Heart left ventricle (tissue), 16 donors: ENCODE measurements at regions of chr20 and their contacts with region 1.

Region 1: DNA sequence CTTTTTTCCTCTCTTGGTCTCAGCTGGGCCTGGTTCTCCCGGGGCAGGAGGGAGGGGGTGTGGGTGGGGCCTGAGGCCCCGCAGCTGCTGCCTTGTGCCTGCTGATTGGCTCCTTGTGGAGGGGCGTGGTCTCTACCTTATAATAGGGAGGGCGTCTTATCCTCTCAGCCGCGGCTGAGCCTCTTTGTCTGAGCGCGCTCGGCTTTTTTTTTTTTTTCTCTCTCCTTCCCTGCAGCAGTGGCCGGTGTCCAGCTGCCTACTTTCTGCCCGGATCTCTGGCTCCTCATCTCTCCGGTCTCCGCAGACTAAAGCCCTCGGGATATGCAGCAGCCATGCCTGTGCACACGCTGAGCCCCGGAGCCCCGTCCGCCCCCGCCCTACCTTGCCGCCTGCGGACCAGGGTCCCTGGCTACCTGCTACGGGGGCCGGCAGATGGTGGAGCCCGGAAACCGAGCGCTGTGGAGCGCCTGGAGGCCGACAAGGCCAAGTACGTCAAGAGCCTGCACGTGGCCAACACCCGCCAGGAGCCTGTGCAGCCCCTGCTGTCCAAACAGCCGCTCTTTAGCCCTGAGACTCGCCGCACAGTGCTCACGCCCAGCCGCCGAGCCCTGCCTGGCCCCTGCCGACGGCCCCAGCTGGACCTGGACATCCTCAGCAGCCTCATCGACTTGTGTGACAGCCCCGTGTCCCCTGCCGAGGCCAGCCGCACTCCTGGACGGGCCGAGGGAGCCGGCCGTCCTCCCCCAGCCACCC is 11.1 kb downstream of the FAM110A start:
- DNase-seq: peak; percentile 92 to 95 (median 93)
- ATAC-seq: peak; percentile 97 to 99 (median 98)
- H3K4me3 ChIP-seq: peak overlapping the region in 11 of 12 donors; percentile 10 to 62 (median 50)
- H3K27ac ChIP-seq: peak overlapping the region in 2 of 12 donors; percentile 48 to 50
- H3K4me1 ChIP-seq: peaks cover 0 to 62% (median 18%) of the 10 kb centered on the region in 12 donors
- H3K27me3 ChIP-seq: peaks cover 0 to 8% (median 0%) of the 10 kb centered on the region in 9 donors
- CTCF ChIP-seq: no peak
- POLR2A ChIP-seq: no peak

Region 2: GRCh38 chr20:667391-667964 is 177.2 kb before region 1 on chr20:
- intact Hi-C with region 1: no loop called
- DNase-seq: peak in 2 of 5 donors; percentile 60 to 75
- ATAC-seq: peak in 2 of 4 donors; percentile 45 to 51
- H3K4me3 ChIP-seq: no peak overlapping the region
- H3K27ac ChIP-seq: peak overlapping the region in 11 of 12 donors; percentile 6 to 80 (median 62)
- H3K4me1 ChIP-seq: peaks cover 0 to 53% (median 10%) of the 10 kb centered on the region in 12 donors
- H3K27me3 ChIP-seq: peaks cover 6 to 57% (median 39%) of the 10 kb centered on the region in 9 donors
- CTCF ChIP-seq: peak; percentile 71 to 92 (median 81)
- POLR2A ChIP-seq: no peak

Region 3: DNA sequence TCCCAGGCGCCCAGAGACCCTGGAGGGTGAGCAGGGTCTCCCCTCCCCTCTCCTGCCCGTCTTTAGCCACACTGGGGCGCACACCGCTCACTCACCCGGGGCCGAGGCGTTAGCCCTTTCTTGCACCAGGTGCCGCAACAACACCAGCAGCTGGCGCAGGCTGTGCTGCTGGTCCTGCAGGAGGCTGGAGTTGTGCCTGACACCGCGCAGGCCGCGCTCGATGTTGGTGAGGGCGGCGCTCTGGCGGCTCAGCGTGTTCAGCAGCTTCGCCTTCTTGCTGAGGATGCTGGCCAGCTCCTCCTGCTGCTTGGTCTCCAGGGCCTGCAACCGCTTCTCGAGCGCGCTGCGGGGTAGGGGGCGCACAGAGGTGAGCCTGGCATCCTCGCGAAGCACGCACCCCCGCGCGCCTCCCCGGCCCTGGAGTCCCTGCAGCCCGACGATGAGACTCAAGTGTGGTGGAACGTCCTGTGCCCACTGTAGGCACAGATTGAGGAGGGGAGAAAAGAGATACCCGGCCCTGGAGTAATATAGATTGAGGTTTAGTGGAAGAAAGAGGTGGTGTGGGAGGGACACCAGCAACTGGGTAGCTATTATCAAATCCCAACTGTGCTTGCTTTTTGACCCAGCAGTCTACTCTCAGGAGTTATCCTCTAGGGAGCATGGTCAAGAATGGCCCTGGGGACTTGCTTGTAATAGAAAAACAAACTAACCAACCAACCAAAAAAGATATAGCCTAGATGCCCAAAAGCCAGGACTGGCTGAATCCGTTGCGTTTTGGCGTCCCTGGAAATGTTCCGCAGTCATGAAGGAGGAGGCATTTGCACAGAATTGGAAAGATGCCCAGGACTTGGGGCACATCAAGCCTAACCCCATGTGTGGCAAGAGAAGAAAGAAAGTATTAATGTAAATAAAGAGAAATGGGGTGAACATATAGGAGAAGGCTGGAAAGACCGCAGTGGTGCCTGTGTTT is 40.6 kb after region 1 on chr20:
- intact Hi-C with region 1: loop called in 1 of 10 experiments (anchors 5 kb)
- DNase-seq: peak in 4 of 5 donors; percentile 25 to 79 (median 58)
- ATAC-seq: peak; percentile 25 to 85 (median 83)
- H3K4me3 ChIP-seq: no peak overlapping the region
- H3K27ac ChIP-seq: no peak overlapping the region
- H3K4me1 ChIP-seq: peaks cover 0 to 23% (median 3%) of the 10 kb centered on the region in 12 donors
- H3K27me3 ChIP-seq: peaks cover 0 to 14% (median 0%) of the 10 kb centered on the region in 9 donors
- CTCF ChIP-seq: peak in 5 of 12 donors; percentile 9 to 28 (median 17)
- POLR2A ChIP-seq: no peak

Region 4: GRCh38 chr20:991850-992249 is 147.2 kb after region 1 on chr20:
- intact Hi-C with region 1: no loop called
- DNase-seq: no peak
- ATAC-seq: no peak
- H3K4me3 ChIP-seq: no peak overlapping the region
- H3K27ac ChIP-seq: no peak overlapping the region
- H3K4me1 ChIP-seq: no peaks in the 10 kb centered on the region
- H3K27me3 ChIP-seq: peaks cover 0 to 50% (median 6%) of the 10 kb centered on the region in 9 donors
- CTCF ChIP-seq: no peak
- POLR2A ChIP-seq: no peak